Ascending aorta (tissue), 2 donors: ENCODE measurements at regions of chr2 and their contacts with region 1.

Region 1: DNA sequence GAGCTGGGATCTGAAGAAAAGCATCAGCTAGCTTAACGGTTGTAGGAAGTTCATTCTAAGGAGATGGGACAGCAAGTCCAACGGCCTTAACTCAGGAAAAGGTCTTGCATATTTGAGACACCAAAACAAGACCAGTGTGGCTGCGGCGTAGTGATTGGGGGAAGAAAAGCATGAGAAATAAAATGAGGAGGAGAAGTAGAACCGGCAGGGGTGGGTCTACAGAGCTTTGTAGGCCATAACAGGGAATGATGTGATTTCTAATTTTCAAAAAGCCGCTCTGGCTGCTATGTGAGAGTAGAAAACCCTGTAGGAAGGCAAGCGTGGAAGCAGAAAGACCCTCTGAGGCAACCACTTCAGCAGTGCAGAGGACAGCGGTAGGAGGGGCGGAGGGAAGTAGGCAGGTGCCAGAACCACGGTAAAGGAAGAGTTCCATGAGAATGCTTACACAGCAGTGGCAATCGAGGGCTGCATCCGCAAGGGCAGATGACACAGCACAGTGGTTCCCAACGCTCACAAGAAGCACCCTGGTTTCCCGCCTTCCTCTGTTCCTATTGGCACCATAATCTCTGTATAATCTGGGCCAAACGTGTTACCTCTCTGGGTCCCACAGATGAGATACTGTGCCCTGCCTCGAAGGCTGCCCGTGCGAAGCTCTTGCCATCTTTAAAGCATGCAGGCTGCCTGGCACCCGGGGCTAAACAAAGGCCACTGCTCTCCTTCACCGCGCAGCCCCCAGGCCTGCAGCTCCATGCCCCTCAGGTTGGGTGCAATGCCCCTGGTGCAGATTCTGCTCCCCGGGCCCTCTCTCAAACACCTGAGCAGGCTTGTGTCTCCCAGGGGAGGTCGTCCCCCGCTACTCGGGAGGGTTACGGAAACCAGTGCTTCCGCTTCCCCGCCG is 791 bp downstream of the ANKRD39 start:
- DNase-seq: no peak
- H3K4me3 ChIP-seq: peak overlapping the region; percentile 63 to 84
- H3K27ac ChIP-seq: peak overlapping the region; percentile 61 to 79
- H3K4me1 ChIP-seq: peaks cover 3 to 22% of the 10 kb centered on the region in 2 donors
- H3K27me3 ChIP-seq: no peaks in the 10 kb centered on the region
- CTCF ChIP-seq: no peak

Region 2: GRCh38 chr2:96868555-96869280 is 11.7 kb after region 1 on chr2:
- intact Hi-C with region 1: loop called (anchors 1 kb)
- DNase-seq: peak; percentile 73 to 95
- H3K4me3 ChIP-seq: peak overlapping the region; percentile 88 to 98
- H3K27ac ChIP-seq: peak overlapping the region; percentile 96 to 99
- H3K4me1 ChIP-seq: peaks cover 18 to 38% of the 10 kb centered on the region in 2 donors
- H3K27me3 ChIP-seq: no peaks in the 10 kb centered on the region
- CTCF ChIP-seq: peak; percentile 51 to 66 (median 62)

Region 3: GRCh38 chr2:96927405-96928243 is 70.6 kb after region 1 on chr2:
- intact Hi-C with region 1: loop called (anchors 2 kb)
- DNase-seq: no peak
- H3K4me3 ChIP-seq: peak overlapping the region; percentile 42 to 62
- H3K27ac ChIP-seq: peak overlapping the region in 1 of 2 donors; percentile 10
- H3K4me1 ChIP-seq: peaks cover 0 to 3% of the 10 kb centered on the region in 2 donors
- H3K27me3 ChIP-seq: no peaks in the 10 kb centered on the region
- CTCF ChIP-seq: peak in 2 of 3 experiments; percentile 14 to 26

Region 4: DNA sequence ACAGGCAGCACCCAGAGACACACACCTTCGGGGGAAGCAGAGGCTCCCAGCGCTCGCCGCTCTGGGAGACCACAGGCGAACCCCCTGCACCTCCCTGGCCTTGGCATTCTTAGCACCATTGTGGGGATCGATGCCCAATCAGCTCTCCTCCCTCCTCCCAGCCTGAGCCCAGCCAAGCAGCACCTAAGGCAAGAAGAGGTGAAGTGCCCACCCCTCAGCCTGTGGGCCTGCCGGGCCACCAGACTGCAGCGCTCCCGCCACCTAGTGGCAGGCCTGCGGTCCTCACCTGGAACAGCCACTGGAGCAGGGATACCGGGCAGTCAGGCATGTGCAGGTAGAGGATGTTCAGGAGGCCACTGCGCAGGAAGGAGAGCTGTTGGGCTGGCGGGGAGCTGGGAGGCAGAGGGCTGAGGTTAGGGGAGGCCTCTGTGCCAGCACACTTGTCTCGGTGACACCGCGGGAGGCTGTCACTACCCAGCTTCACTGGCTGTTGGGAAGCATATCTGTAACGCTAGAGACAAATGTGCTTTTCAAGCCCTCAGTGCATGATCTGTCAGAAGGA is 94.1 kb after region 1 on chr2:
- intact Hi-C with region 1: loop called (anchors 1 kb)
- DNase-seq: peak in 1 of 2 donors; percentile 84
- H3K4me3 ChIP-seq: no peak overlapping the region
- H3K27ac ChIP-seq: no peak overlapping the region
- H3K4me1 ChIP-seq: peaks cover 4 to 18% of the 10 kb centered on the region in 2 donors
- H3K27me3 ChIP-seq: no peaks in the 10 kb centered on the region
- CTCF ChIP-seq: peak; percentile 91 to 97 (median 96)